ENCODE measurements at regions of chr17 and their contacts with region 1.

Region 1: GRCh38 chr17:80892019-80892855 is 99.4 kb upstream of the CHMP6 start:
- DNase-seq: peak; percentile 97
- H3K4me3 Mint-ChIP-seq: peak overlapping the region; percentile 89
- H3K27ac Mint-ChIP-seq: peak overlapping the region; percentile 96
- H3K4me1 Mint-ChIP-seq: peaks cover 71% of the 10 kb centered on the region
- H3K27me3 Mint-ChIP-seq: no peaks in the 10 kb centered on the region

Region 2: DNA sequence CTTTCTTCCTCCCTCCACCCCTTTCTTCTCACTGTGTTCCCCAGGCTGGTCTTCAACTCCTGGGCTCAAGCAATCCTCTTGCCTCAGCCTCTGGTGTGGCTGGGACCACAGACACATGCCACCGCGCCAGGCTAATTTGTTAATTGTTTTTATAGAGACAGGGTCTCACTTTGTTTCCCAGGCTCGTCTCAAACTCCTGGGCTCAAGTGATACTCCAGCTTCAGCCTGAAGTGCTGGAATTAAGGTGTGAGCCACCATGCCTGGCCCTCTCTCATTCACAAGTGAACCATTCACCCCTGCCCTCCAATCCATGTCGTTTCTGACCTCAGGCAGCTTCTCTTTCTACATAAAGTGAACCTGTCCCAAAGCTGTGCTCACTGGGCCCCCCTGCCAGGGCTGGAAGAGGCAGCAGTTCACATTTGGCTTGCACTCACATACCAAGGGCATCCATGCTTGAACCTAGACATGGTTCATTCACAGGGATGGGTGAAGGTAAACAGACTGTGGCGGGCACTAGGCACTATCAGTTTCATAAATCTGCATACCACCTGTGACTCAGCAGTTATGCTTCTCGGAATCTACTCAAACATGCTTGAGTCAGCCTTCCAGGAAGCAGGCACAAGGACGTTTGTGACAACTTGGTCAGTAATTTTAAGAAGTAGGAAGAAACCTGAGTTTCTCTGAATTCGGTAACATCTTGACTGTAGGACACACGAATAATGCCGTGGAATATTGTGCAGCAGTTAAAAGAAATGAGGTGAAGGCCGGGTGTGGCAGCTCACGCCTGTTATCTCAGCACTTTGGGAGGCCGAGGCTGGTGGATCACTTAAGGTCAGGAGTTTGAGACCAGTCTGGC is 637.6 kb before region 1 on chr17:
- CTCF ChIA-PET with region 1: no interaction called
- POLR2A ChIA-PET with region 1: no interaction called
- intact Hi-C with region 1: loop called (anchors 2 kb)
- DNase-seq: peak; percentile 86
- H3K4me3 Mint-ChIP-seq: peak overlapping the region; percentile 41
- H3K27ac Mint-ChIP-seq: peak overlapping the region; percentile 92
- H3K4me1 Mint-ChIP-seq: peaks cover 71% of the 10 kb centered on the region
- H3K27me3 Mint-ChIP-seq: no peaks in the 10 kb centered on the region

Region 3: GRCh38 chr17:80605326-80606066 is 286.7 kb before region 1 on chr17:
- CTCF ChIA-PET with region 1: no interaction called
- POLR2A ChIA-PET with region 1: interaction called, 8 read pairs
- intact Hi-C with region 1: loop called (anchors 1 kb)
- DNase-seq: peak; percentile 88
- H3K4me3 Mint-ChIP-seq: peak overlapping the region; percentile 10
- H3K27ac Mint-ChIP-seq: peak overlapping the region; percentile 79
- H3K4me1 Mint-ChIP-seq: peaks cover 60% of the 10 kb centered on the region
- H3K27me3 Mint-ChIP-seq: no peaks in the 10 kb centered on the region

Region 4: DNA sequence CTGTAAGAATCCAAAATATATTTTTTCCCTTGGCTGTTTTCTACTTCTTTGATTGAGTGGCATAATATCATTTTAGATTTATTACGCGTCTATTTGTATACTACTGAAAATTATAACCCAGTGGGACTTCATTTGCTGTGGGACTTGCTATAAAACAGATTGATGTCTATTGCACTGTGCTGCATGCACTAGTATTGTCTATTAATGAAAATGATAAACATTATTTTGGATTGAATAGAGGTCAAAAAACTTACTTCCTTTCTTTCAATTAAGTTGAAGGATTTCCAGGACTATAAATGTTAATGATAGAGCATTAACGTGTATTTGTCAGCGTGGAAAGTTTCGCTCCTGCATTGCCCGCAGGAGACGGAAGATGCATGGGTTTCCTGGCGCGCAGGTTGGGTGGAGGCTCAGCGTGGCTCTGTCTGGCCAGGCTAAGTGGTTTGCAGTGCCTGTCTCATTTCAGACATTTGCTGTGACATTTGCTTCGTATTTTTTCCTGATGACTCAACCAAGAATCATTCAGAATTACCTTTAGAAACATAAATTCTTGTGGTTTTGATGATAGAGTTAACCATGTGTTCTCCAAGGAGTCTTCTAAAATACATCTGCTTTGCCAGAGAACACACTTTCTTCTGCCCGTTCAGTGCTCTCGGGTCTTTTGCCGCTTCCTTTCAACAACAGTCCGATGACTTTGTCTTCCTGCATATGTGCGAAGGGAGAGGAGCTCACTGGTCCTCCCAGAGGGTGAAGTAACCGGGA is 130.9 kb before region 1 on chr17:
- CTCF ChIA-PET with region 1: interaction called, 3 read pairs
- POLR2A ChIA-PET with region 1: interaction called, 5 read pairs
- intact Hi-C with region 1: loop called (anchors 1 kb)
- DNase-seq: peak; percentile 86
- H3K4me3 Mint-ChIP-seq: peak overlapping the region; percentile 68
- H3K27ac Mint-ChIP-seq: peak overlapping the region; percentile 96
- H3K4me1 Mint-ChIP-seq: peaks cover 73% of the 10 kb centered on the region
- H3K27me3 Mint-ChIP-seq: no peaks in the 10 kb centered on the region

Region 5: DNA sequence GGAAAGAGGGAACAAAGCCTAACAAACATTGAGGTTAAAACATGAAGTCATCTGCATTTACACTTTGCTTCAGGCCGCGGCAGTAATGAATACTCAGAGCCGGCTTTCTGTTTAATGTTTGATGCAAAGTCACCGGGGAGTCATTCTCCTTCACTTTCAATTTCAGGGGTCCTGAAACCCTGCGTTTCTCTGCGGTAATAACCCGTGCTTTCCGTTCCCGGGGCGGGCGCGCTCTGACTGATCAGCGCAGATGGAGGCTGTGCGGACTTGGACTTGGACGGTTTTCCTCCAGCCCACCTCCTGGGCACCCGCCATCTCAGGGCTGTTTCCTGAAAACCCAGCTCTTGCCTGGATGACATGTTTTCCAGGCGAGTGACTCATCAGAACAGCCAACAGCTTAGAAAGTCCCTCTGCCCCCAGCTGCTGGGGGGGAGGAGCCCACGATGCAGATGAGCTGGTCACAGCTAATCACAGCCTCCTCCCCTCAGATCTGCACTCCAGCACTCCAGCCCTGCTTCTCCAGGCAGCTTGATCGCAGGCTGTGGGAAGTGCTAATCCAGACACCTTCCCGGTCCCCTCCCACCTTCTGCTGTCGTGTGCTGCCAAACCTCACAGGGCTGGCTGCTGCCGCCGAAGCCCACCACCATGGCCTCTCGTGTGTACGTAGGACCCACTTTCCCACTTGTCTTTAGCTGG is 59.2 kb before region 1 on chr17:
- CTCF ChIA-PET with region 1: interaction called, 8 read pairs
- POLR2A ChIA-PET with region 1: interaction called, 16 read pairs
- intact Hi-C with region 1: loop called (anchors 1 kb)
- DNase-seq: peak; percentile 92
- H3K4me3 Mint-ChIP-seq: peak overlapping the region; percentile 74
- H3K27ac Mint-ChIP-seq: peak overlapping the region; percentile 94
- H3K4me1 Mint-ChIP-seq: peaks cover 34% of the 10 kb centered on the region
- H3K27me3 Mint-ChIP-seq: no peaks in the 10 kb centered on the region

Region 6: DNA sequence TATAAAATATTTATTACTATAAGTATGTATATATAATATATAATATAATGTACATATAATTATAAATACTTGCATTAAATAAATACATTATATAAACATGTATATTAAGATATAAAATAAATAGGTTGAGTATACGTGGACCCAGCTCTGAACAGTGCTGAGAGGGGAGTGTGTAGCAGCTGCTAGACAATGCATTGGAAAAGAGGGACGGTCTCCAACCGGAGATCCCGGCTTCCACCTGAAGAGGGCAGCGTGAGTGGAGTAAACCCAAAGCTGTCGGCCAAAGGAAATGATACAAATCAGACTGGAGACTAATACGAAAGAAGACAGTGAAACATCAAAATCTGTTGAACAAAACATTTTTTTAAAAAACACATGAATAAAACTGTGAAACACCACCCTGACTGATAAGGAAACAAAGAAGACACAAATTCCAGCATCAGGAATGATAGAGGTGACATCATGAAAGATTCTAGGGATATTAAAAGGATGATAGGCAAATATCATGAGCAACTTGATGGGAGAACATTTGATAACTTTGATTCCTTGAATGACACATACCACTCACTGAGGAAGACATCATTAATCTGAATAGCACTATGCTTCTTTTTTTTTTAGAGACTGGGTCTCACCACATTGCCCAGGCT is 26.0 kb before region 1 on chr17:
- CTCF ChIA-PET with region 1: interaction called, 27 read pairs
- POLR2A ChIA-PET with region 1: interaction called, 5 read pairs
- intact Hi-C with region 1: loop called (anchors 1 kb)
- DNase-seq: peak; percentile 86
- H3K4me3 Mint-ChIP-seq: no peak overlapping the region
- H3K27ac Mint-ChIP-seq: peak overlapping the region; percentile 80
- H3K4me1 Mint-ChIP-seq: peaks cover 76% of the 10 kb centered on the region
- H3K27me3 Mint-ChIP-seq: no peaks in the 10 kb centered on the region

Region 7: GRCh38 chr17:80938556-80938955 is 46.3 kb after region 1 on chr17:
- CTCF ChIA-PET with region 1: no interaction called
- POLR2A ChIA-PET with region 1: no interaction called
- intact Hi-C with region 1: loop called (anchors 1 kb)
- DNase-seq: peak; percentile 77
- H3K4me3 Mint-ChIP-seq: no peak overlapping the region
- H3K27ac Mint-ChIP-seq: peak overlapping the region; percentile 74
- H3K4me1 Mint-ChIP-seq: peaks cover 41% of the 10 kb centered on the region
- H3K27me3 Mint-ChIP-seq: no peaks in the 10 kb centered on the region

Region 8: DNA sequence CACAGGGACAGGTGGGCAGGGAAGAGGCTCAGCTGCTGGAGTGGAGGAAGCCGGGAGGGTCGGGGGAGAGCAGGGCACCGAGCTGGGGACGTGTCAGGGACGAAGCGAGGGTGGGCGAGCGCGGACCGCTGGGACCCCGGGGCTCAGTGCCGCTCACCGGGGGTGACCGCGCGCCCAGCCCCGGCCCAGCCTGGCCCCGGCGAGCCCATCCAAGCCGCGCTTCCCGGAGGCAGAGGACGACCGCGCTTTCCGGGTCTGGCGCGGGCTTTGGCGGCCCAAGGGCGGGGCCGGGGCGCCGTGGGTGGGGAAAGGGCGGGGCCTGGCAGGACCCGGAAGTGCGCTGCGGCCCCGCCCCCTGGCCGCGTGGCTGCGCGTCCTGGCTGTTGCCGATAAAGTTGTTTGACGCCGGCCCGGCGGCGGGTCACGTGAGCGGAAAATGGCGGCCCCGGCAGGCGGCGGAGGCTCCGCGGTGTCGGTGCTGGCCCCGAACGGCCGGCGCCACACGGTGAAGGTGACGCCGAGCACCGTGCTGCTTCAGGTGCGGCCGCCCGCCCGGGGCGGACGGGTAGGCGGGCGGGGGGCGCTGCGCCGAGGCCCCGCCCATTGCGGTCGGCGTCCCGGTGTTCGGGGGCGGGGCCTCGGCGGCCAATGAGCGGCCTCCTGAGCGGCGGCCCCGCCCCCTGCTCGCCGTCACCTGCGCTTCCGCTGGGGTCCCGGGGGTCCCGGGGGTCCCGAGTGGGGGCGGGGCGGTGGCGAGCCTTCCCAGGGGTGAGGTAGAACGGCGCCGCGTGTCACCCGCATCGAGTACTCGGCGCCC is 1085.2 kb after region 1 on chr17 and contains the start of gene ASPSCR1:
- CTCF ChIA-PET with region 1: no interaction called
- POLR2A ChIA-PET with region 1: no interaction called
- intact Hi-C with region 1: no loop called
- DNase-seq: peak; percentile 91
- H3K4me3 Mint-ChIP-seq: peak within 1 kb of the TSS; percentile 92
- H3K27ac Mint-ChIP-seq: peak within 1 kb of the TSS; percentile 92
- H3K4me1 Mint-ChIP-seq: peaks cover 33% of the 10 kb centered on the region
- H3K27me3 Mint-ChIP-seq: no peaks in the 10 kb centered on the region
- total RNA-seq, gene ASPSCR1: 25.4 to 27.1 TPM

Measured in activated CD4-positive, alpha-beta memory T cell treated with anti-CD3 and anti-CD28 coated beads for 36 hours (primary cell).